ENCODE measurements at regions of chr2 and their contacts with region 1.

Region 1: GRCh38 chr2:85551698-85552678 is 9.3 kb downstream of the GGCX start:
- DNase-seq: peak; percentile 71 to 85 (median 79)
- ATAC-seq: peak; percentile 55 to 75 (median 64)
- H3K4me3 ChIP-seq: no peak overlapping the region
- H3K27ac ChIP-seq: peak overlapping the region in 2 of 12 donors; percentile 17 to 55
- H3K4me1 ChIP-seq: peaks cover 0 to 26% (median 0%) of the 10 kb centered on the region in 12 donors
- H3K27me3 ChIP-seq: no peaks in the 10 kb centered on the region
- CTCF ChIP-seq: peak; percentile 83 to 95 (median 90)
- POLR2A ChIP-seq: no peak

Region 2: DNA sequence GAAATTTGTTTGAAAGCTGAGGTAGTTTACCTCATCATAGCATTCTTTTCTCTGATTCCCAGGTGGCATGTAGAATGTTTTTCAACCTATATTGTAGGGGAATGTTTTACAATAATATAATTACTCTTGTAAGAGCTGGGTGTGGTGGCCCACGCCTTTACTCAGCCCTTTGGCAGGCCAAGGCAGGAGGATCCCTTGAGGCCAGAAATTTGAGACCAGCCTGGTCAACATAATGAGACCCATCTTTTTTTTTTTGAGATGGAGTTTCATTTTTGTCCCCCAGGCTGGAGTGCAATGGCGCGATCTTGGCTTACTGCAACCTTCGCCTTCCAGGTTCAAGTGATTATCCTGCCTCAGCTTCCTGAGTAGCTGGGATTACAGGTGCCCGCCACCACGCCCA is 67.6 kb after region 1 on chr2:
- intact Hi-C with region 1: loop called in 1 of 10 experiments (anchors 5 kb)
- DNase-seq: no peak
- ATAC-seq: no peak
- H3K4me3 ChIP-seq: no peak overlapping the region
- H3K27ac ChIP-seq: no peak overlapping the region
- H3K4me1 ChIP-seq: peaks cover 3 to 44% (median 24%) of the 10 kb centered on the region in 12 donors
- H3K27me3 ChIP-seq: no peaks in the 10 kb centered on the region
- CTCF ChIP-seq: no peak
- POLR2A ChIP-seq: no peak

Region 3: DNA sequence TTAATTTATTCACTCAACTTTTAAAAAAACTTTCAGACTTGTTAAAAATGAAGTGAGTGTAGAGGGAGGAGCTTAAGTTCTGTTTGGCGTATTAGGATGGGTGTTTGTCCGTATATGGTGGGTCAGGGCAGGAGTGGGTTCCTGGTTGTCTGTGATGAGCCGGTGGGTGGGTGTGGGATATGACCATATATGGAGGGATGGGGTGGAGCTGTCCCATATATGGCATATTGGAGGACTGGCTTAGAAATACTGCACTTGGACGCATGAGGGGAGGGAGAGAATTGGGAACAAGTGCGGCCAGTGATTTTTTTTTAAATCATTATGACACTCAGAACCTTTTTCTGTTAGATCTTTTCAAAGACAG is 890.6 kb after region 1 on chr2:
- intact Hi-C with region 1: no loop called
- DNase-seq: peak; percentile 82 to 89 (median 87)
- ATAC-seq: peak; percentile 72 to 90 (median 84)
- H3K4me3 ChIP-seq: peak overlapping the region; percentile 67 to 97 (median 76)
- H3K27ac ChIP-seq: peak overlapping the region; percentile 91 to 99 (median 96)
- H3K4me1 ChIP-seq: peaks cover 0 to 52% (median 41%) of the 10 kb centered on the region in 12 donors
- H3K27me3 ChIP-seq: no peaks in the 10 kb centered on the region
- CTCF ChIP-seq: no peak
- POLR2A ChIP-seq: peak in 1 of 2 donors; percentile 62

Measured in heart left ventricle (tissue), 16 donors.